GM12878 (cell line): ENCODE measurements at regions of chr6 and their contacts with region 1.

Region 1: GRCh38 chr6:151323791-151324487 is 67.4 kb downstream of the ZBTB2 start:
- DNase-seq: peak; percentile 9
- ATAC-seq: peak; percentile 96
- H3K4me3 ChIP-seq: no peak overlapping the region
- H3K27ac ChIP-seq: no peak overlapping the region
- H3K4me1 ChIP-seq: no peaks in the 10 kb centered on the region
- H3K27me3 ChIP-seq: peaks cover 0 to 7% of the 10 kb centered on the region in 2 experiments; a peak in 2 of 4 replicates
- CTCF ChIP-seq: peak; percentile 92 to 98 (median 96)
- EP300 ChIP-seq: 0 out of 4 replicates have a peak, but pooled peaks of 1 of the 2 experiments have one; percentile 18
- POLR2A ChIP-seq: no peak
- RAD21 ChIP-seq: peak; percentile 83

Region 2: GRCh38 chr6:150822932-150823331 is 501.0 kb before region 1 on chr6:
- CTCF ChIA-PET with region 1: interaction called, 65 read pairs
- POLR2A ChIA-PET with region 1: no interaction called
- RAD21 ChIA-PET with region 1: interaction called, 22 read pairs
- SMC1A ChIA-PET with region 1: interaction called, 5 read pairs
- in situ Hi-C with region 1: no loop called
- intact Hi-C with region 1: loop called (anchors 5 kb)
- DNase-seq: no peak
- ATAC-seq: no peak
- H3K4me3 ChIP-seq: no peak overlapping the region
- H3K27ac ChIP-seq: no peak overlapping the region
- H3K4me1 ChIP-seq: no peaks in the 10 kb centered on the region
- H3K27me3 ChIP-seq: no peaks in the 10 kb centered on the region
- CTCF ChIP-seq: no peak
- EP300 ChIP-seq: no peak
- POLR2A ChIP-seq: no peak
- RAD21 ChIP-seq: no peak

Region 3: DNA sequence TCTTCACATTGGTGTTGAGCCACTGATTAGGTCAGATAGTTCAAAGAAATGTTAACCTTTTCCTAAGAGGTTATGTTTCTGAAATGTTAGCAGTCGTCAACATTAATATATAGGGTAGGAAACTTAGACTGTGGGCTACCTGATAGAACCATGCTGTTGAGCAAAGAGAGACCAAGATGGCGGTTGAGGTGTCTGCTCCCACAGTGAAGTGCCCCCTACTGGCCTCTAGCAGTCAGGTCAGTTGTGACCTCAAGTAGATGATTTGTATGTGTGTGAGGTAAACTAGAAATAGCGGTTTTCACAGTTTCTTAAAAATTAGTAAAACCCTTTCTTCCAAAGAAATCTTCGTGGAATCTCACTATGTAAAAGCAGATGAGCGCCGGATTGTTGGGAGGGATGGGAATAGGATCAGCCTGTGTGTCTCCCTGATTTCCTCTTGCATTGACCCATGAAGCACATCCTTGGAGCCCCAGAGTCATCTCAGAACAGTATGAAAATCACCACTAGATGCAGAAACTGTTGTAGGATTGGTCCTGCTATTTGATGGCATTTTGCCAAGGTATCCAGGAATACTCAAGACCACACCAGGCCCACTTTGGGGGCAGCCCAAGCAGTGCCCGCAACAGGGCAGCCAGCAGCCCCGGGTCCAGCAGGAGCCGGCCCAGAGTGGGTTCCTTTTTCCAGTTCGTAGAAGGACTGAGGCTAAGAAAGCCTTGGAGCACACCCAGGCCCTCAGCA is 418.0 kb before region 1 on chr6:
- CTCF ChIA-PET with region 1: interaction called, 369 read pairs
- POLR2A ChIA-PET with region 1: no interaction called
- RAD21 ChIA-PET with region 1: interaction called, 3 read pairs
- SMC1A ChIA-PET with region 1: no interaction called
- in situ Hi-C with region 1: no loop called
- intact Hi-C with region 1: no loop called
- DNase-seq: no peak
- ATAC-seq: peak; percentile 66; the same call in 2 of the 3 replicates
- H3K4me3 ChIP-seq: no peak overlapping the region
- H3K27ac ChIP-seq: no peak overlapping the region
- H3K4me1 ChIP-seq: no peaks in the 10 kb centered on the region
- H3K27me3 ChIP-seq: no peaks in the 10 kb centered on the region
- CTCF ChIP-seq: peak; percentile 9 to 50 (median 34); a peak in 3 of 6 replicates
- EP300 ChIP-seq: no peak
- POLR2A ChIP-seq: no peak
- RAD21 ChIP-seq: no peak

Region 4: GRCh38 chr6:151014404-151015100 is 309.4 kb before region 1 on chr6:
- CTCF ChIA-PET with region 1: interaction called, 259 read pairs
- POLR2A ChIA-PET with region 1: interaction called, 5 read pairs
- RAD21 ChIA-PET with region 1: interaction called, 83 read pairs
- SMC1A ChIA-PET with region 1: interaction called, 128 read pairs
- in situ Hi-C with region 1: loop called (anchors 5 kb)
- intact Hi-C with region 1: loop called (anchors 1 kb)
- DNase-seq: no peak
- ATAC-seq: peak; percentile 86
- H3K4me3 ChIP-seq: no peak overlapping the region
- H3K27ac ChIP-seq: no peak overlapping the region
- H3K4me1 ChIP-seq: no peaks in the 10 kb centered on the region
- H3K27me3 ChIP-seq: no peaks in the 10 kb centered on the region
- CTCF ChIP-seq: peak; percentile 95 to 97 (median 97)
- EP300 ChIP-seq: no peak
- POLR2A ChIP-seq: no peak
- RAD21 ChIP-seq: peak; percentile 90

Region 5: DNA sequence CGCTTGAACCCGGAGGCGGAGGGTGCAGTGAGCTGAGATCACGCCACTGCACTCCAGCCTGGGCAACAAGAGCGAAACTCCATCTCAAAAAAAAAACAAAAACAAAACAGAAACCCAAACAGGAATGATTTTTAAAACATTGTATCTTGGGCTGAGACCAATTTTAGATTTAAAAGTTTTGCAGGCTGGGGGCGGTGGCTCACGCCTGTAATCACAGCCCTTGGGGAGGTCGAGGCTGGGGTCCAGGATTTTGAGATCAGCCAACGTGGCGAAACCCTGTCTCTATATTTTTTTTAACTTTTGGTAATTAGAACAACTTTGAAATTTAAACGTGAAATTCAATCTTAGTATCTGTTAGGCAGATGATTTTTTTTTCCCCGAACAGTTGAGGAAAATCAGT is 13.7 kb before region 1 on chr6:
- CTCF ChIA-PET with region 1: interaction called, 11 read pairs
- POLR2A ChIA-PET with region 1: no interaction called
- RAD21 ChIA-PET with region 1: no interaction called
- SMC1A ChIA-PET with region 1: interaction called, 4 read pairs
- in situ Hi-C with region 1: no loop called
- intact Hi-C with region 1: no loop called
- DNase-seq: no peak
- ATAC-seq: no peak
- H3K4me3 ChIP-seq: no peak overlapping the region
- H3K27ac ChIP-seq: no peak overlapping the region
- H3K4me1 ChIP-seq: no peaks in the 10 kb centered on the region
- H3K27me3 ChIP-seq: no peaks in the 10 kb centered on the region
- CTCF ChIP-seq: no peak
- EP300 ChIP-seq: no peak
- POLR2A ChIP-seq: no peak
- RAD21 ChIP-seq: no peak

Region 6: GRCh38 chr6:151335930-151336329 is 12.0 kb after region 1 on chr6:
- CTCF ChIA-PET with region 1: interaction called, 70 read pairs
- POLR2A ChIA-PET with region 1: no interaction called
- RAD21 ChIA-PET with region 1: interaction called, 27 read pairs
- SMC1A ChIA-PET with region 1: interaction called, 33 read pairs
- in situ Hi-C with region 1: no loop called
- intact Hi-C with region 1: no loop called
- DNase-seq: no peak
- ATAC-seq: no peak
- H3K4me3 ChIP-seq: no peak overlapping the region
- H3K27ac ChIP-seq: no peak overlapping the region
- H3K4me1 ChIP-seq: no peaks in the 10 kb centered on the region
- H3K27me3 ChIP-seq: no peaks in the 10 kb centered on the region
- CTCF ChIP-seq: no peak
- EP300 ChIP-seq: no peak
- POLR2A ChIP-seq: no peak
- RAD21 ChIP-seq: no peak

Region 7: GRCh38 chr6:151370509-151371078 is 46.7 kb after region 1 on chr6:
- CTCF ChIA-PET with region 1: interaction called, 10 read pairs
- POLR2A ChIA-PET with region 1: no interaction called
- RAD21 ChIA-PET with region 1: no interaction called
- SMC1A ChIA-PET with region 1: no interaction called
- in situ Hi-C with region 1: no loop called
- intact Hi-C with region 1: no loop called
- DNase-seq: no peak
- ATAC-seq: no peak
- H3K4me3 ChIP-seq: no peak overlapping the region
- H3K27ac ChIP-seq: no peak overlapping the region
- H3K4me1 ChIP-seq: no peaks in the 10 kb centered on the region; the same call in 1 of the 2 replicates
- H3K27me3 ChIP-seq: no peaks in the 10 kb centered on the region
- CTCF ChIP-seq: no peak
- EP300 ChIP-seq: no peak
- POLR2A ChIP-seq: no peak
- RAD21 ChIP-seq: no peak

Region 8: DNA sequence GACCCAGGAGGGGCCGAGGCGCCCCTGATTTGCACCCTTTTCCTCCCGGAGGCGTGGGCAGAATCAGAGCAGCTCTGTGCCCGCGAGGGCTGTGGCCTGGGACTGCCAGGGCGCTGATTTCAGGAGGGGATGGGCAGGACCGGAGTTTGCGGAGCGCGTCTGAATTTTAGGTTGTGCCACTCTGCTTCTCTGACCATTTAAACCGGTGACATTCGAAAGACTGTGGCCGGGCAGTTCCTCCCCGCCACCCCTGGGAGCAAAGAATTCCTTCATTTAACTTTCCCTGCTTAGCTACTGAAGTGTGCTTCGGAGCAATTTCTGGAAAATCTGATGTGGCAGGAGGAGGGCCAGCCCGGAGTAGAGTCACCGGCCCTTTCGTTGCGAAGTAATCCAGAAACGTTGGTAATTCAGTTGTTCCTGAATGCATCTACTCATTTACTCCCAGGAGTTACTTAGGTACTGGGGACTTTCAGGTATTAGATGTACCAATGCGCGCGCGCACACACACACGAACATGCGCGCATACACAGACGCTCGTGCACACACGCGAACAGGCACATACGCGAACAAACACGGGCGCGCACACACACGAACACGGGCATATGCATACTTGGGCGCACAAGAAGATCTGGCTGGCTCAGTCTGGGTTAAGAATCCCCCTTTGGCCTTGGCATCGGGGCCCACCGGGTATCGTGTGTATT is 170.4 kb after region 1 on chr6:
- CTCF ChIA-PET with region 1: no interaction called
- POLR2A ChIA-PET with region 1: no interaction called
- RAD21 ChIA-PET with region 1: no interaction called
- SMC1A ChIA-PET with region 1: no interaction called
- in situ Hi-C with region 1: no loop called
- intact Hi-C with region 1: no loop called
- DNase-seq: no peak
- ATAC-seq: peak; percentile 53
- H3K4me3 ChIP-seq: peak overlapping the region; percentile 50
- H3K27ac ChIP-seq: no peak overlapping the region
- H3K4me1 ChIP-seq: peaks cover 2% of the 10 kb centered on the region
- H3K27me3 ChIP-seq: peaks cover 3 to 6% of the 10 kb centered on the region in 2 experiments; a peak in 3 of 4 replicates
- CTCF ChIP-seq: no peak
- EP300 ChIP-seq: no peak
- POLR2A ChIP-seq: no peak
- RAD21 ChIP-seq: no peak